Tibial artery (tissue), 4 donors: ENCODE measurements at regions of chr1 and their contacts with region 1.

Region 1: DNA sequence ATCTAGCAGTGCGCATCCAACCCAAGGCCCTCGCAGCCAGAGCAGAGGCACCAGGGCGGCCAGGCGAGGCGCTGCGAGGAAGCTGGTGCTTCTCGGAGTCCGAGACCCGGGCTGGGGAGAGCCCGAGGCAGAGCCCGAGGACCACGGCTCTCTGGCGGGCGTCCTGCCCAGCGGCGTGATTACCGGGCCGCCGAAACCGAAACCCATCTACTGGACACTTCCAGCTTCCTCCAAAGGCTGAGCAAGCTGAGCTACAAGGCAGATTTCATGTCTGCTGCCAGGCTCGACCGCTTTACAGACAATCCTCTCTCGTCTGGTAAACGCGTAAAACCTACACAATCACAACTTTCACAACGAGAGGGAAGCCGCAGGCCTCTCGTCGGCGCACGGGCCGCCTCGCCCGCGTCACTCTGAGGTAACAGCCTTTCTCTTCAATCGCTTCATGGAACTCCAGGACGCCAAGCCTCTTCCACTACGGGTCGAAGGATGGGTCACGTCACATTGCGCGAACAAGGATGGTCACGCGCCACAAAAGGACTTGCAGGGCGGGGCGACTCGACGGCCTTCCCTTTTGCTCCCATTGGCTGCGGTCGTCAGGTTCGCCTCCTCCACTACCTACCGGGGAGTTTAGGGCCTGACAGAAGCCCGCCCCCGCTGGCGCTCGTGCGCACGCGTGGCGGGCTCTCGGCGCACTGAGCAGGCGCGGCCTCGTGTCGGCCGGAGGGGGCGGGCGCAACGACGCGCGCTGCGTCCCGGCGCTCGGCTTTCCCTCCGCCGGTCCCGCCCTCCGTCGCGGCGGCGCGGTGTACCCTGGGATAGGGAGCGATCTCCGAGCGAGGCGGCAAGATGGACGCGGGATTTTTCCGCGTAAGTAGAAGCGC is at the start of gene SRRM1:
- DNase-seq: peak; percentile 99 to 100
- H3K4me3 ChIP-seq: peak within 1 kb of the TSS; percentile 98 to 99
- H3K27ac ChIP-seq: peak within 1 kb of the TSS; percentile 98 to 99
- H3K4me1 ChIP-seq: peaks cover 0 to 38% (median 26%) of the 10 kb centered on the region in 4 donors
- H3K27me3 ChIP-seq: no peaks in the 10 kb centered on the region
- CTCF ChIP-seq: no peak

Region 2: GRCh38 chr1:25223471-25223870 is 580.8 kb after region 1 on chr1:
- intact Hi-C with region 1: loop called (anchors 10 kb)
- DNase-seq: no peak
- H3K4me3 ChIP-seq: no peak overlapping the region
- H3K27ac ChIP-seq: no peak overlapping the region
- H3K4me1 ChIP-seq: no peaks in the 10 kb centered on the region
- H3K27me3 ChIP-seq: no peaks in the 10 kb centered on the region
- CTCF ChIP-seq: no peak